Heart left ventricle (tissue), 16 donors: ENCODE measurements at regions of chr14 and their contacts with region 1.

Region 1: DNA sequence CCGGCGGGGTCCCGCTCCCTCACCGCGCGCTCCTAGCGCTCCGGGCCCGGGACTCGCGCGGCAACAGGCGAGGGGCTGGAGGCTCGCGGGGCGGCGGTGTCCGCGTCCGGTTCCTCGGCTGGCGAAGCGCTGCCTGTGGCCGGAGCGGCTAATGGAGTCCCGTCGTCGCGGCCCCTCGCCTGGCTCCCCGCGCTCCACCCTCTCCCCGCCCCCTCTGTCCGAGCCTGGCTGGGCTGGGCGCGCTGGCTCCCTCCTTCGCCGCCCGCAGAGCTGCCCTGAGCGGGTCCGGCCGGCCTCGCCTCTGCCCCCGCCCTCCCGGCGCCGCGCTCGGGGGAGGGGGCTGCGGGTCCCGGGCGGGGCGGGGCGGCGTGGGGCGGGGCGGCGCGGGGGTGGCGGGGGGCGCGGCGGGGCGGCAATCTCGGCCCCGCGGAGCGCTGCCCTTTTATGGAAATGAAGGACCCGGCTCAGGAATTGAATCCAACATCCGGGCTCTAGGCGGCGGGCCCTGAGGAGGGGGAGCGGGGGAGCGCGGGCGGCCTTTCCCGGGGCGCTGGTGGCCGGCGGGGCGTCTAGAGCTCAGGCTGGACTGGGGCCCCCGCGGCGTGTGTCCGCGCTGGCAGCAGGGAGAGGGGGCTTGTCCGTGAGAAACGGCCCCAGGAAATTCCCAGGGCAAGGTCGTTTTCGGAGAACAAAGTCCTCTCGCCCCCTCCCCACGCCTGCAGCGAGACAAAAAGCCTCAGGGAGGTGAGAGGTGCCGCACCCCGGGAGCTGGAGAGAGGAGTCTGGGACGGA is at the start of gene FERMT2:
- DNase-seq: peak; percentile 92 to 94 (median 93)
- ATAC-seq: peak; percentile 89 to 97 (median 92)
- H3K4me3 ChIP-seq: peak within 1 kb of the TSS; percentile 65 to 98 (median 94)
- H3K27ac ChIP-seq: peak within 1 kb of the TSS; percentile 96 to 100 (median 99)
- H3K4me1 ChIP-seq: peaks cover 11 to 43% (median 33%) of the 10 kb centered on the region in 12 donors
- H3K27me3 ChIP-seq: peaks cover 0 to 44% (median 0%) of the 10 kb centered on the region in 9 donors
- CTCF ChIP-seq: no peak
- POLR2A ChIP-seq: peak; percentile 5 to 79
- total RNA-seq, gene FERMT2: 87.4 to 158 (median 104) TPM

Region 2: DNA sequence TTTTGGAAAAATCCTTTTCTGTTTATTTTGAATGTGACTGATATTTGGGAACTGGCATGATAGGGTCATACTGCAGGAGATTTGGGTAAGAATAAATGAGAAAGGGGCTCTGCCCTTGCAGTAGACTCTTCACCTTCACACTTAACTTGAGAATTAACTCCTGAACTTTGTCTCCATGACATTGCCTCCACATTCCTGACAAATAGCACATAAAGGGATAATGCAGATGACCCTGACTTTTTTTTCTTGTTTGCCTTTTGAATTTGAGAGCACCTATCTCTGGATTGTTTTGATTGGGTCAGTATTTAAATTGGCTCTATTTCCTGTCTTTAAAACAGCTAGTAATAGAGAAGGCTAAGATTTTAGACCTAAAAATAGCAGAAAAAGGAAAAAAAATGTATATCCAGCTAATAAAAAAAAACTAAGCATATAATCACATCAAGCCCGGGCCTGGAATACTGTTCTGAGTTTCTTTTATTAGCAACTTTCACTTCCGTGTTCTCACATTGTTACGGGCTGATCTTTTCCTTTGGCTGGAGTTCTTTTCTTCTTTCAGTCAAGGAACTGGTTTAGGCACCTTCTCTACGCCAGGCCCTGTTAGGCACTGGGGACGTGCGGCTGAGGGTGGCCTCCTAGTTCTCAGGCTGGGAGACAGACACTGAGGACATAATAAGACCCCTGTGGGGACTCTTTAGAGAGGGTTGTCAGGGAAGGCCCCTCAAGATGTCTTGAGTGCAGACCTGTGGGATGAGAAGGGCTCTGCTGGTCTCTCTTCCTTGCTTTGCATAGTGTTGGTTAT is 106.6 kb before region 1 on chr14:
- intact Hi-C with region 1: loop called in 3 of 10 experiments (anchors 2 kb)
- DNase-seq: peak in 1 of 5 donors; percentile 63
- ATAC-seq: peak; percentile 33 to 77 (median 68)
- H3K4me3 ChIP-seq: peak overlapping the region in 4 of 12 donors; percentile 1 to 6 (median 2)
- H3K27ac ChIP-seq: peak overlapping the region; percentile 41 to 79 (median 66)
- H3K4me1 ChIP-seq: peaks cover 0 to 21% (median 13%) of the 10 kb centered on the region in 12 donors
- H3K27me3 ChIP-seq: no peaks in the 10 kb centered on the region
- CTCF ChIP-seq: no peak
- POLR2A ChIP-seq: no peak

Region 3: GRCh38 chr14:52879958-52880357 is 71.1 kb before region 1 on chr14:
- intact Hi-C with region 1: loop called in 5 of 10 experiments (anchors 2 to 10 kb)
- DNase-seq: no peak
- ATAC-seq: peak in 1 of 4 donors; percentile 21
- H3K4me3 ChIP-seq: no peak overlapping the region
- H3K27ac ChIP-seq: peak overlapping the region in 7 of 12 donors; percentile 2 to 67 (median 8)
- H3K4me1 ChIP-seq: peaks cover 0 to 50% (median 24%) of the 10 kb centered on the region in 12 donors
- H3K27me3 ChIP-seq: no peaks in the 10 kb centered on the region
- CTCF ChIP-seq: no peak
- POLR2A ChIP-seq: no peak

Region 4: GRCh38 chr14:52910572-52910971 is 40.5 kb before region 1 on chr14:
- intact Hi-C with region 1: loop called in 2 of 10 experiments (anchors 5 kb)
- DNase-seq: no peak
- ATAC-seq: peak in 2 of 4 donors; percentile 34 to 41
- H3K4me3 ChIP-seq: no peak overlapping the region
- H3K27ac ChIP-seq: peak overlapping the region in 5 of 12 donors; percentile 6 to 40 (median 19)
- H3K4me1 ChIP-seq: peaks cover 2 to 50% (median 36%) of the 10 kb centered on the region in 12 donors
- H3K27me3 ChIP-seq: no peaks in the 10 kb centered on the region
- CTCF ChIP-seq: no peak
- POLR2A ChIP-seq: no peak

Region 5: DNA sequence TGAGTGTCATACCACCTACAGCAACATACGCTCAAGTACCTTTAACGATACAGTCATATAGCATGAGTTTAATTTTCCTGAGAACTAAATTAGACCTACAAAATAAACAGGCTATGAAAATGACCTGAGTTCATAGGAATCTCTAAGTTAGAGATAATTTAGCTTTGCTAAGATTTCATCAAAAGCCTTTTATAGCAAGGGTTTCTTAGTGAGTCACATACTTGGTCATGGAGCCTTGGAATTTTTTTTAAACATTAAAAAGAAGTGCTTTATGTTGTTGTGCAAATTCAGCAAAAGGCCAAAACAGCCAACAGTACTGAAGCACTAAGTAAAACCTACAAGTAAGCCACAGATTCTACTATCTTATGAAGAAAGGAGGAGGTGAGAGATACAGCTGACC is 93.4 kb after region 1 on chr14:
- intact Hi-C with region 1: loop called in 1 of 10 experiments (anchors 2 kb)
- DNase-seq: no peak
- ATAC-seq: no peak
- H3K4me3 ChIP-seq: no peak overlapping the region
- H3K27ac ChIP-seq: peak overlapping the region in 1 of 12 donors; percentile 14
- H3K4me1 ChIP-seq: peaks cover 4 to 39% (median 28%) of the 10 kb centered on the region in 12 donors
- H3K27me3 ChIP-seq: no peaks in the 10 kb centered on the region
- CTCF ChIP-seq: no peak
- POLR2A ChIP-seq: no peak